GM23248 (cell line): ENCODE measurements at regions of chr1 and their contacts with region 1.

Region 1: GRCh38 chr1:26787706-26788514 is at the start of gene PIGV:
- DNase-seq: peak; percentile 95
- H3K4me3 ChIP-seq: peak within 1 kb of the TSS; percentile 82
- H3K27ac ChIP-seq: peak within 1 kb of the TSS; percentile 98
- H3K4me1 ChIP-seq: peaks cover 44% of the 10 kb centered on the region
- H3K27me3 ChIP-seq: no peaks in the 10 kb centered on the region
- total RNA-seq, gene PIGV: 28.9 and 31.0 TPM in 2 replicates

Region 2: DNA sequence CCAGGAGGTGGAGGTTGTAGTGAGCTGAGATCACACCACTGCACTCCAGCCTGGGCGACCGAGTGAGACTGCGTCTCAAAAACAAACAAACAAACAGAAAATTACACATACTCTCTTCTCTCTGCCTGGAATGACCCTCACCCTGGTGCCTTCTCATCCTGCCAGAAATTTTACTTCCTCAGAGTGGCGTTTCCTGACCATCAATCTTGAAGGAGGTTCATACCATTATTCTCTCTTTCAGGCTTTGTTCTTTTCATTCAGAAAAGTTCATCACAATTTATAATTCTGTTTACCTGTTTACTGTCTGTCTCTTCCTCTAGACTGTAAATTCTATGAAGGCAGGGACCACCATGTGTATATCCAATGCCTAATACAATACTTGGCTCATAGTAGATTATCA is 179.0 kb before region 1 on chr1:
- in situ Hi-C with region 1: loop called (anchors 5 kb)
- DNase-seq: no peak
- H3K4me3 ChIP-seq: no peak overlapping the region
- H3K27ac ChIP-seq: no peak overlapping the region
- H3K4me1 ChIP-seq: no peaks in the 10 kb centered on the region
- H3K27me3 ChIP-seq: no peaks in the 10 kb centered on the region

Region 3: DNA sequence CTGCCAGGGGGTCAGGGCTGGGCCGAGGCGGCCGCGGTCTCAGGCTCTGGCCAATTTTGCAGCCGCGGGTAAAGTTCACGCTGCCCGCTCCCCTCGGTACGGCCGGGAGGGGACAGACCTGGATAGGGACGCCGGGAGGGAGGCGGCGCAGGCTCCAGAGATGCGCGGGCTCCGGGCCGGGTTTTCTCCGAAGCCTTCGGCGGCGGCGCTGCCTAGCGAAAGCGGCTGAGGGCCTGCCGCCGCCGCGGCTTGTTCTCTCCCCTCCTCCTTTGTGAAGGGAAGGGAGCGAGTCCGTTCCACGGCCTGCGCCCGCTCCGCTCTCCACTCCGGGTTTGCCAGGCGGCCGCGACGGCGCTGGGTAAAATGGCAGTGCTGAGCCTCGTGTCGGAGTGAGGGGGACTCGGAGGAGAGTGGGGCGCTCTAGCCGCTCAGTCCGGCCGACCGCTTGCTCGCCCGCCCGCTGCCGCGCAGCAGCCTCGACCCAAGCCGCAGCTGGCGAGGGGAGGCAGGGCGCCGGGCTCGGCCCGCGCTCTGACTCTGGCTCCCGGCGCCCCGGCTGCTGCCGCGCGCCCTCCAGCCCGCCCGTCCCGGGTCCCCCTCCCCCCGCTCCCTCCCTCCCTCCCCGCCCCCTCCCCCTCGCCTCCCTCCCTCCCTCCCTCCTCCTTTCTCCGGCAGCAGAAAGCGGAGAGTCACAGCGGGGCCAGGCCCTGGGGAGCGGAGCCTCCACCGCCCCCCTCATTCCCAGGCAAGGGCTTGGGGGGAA is 92.4 kb before region 1 on chr1 and contains the start of gene ARID1A:
- in situ Hi-C with region 1: loop called (anchors 10 kb)
- DNase-seq: peak; percentile 98
- H3K4me3 ChIP-seq: peak within 1 kb of the TSS; percentile 83
- H3K27ac ChIP-seq: peak within 1 kb of the TSS; percentile 91
- H3K4me1 ChIP-seq: peaks cover 48% of the 10 kb centered on the region
- H3K27me3 ChIP-seq: no peaks in the 10 kb centered on the region
- total RNA-seq, gene ARID1A: 11.6 and 13.4 TPM in 2 replicates

Region 4: DNA sequence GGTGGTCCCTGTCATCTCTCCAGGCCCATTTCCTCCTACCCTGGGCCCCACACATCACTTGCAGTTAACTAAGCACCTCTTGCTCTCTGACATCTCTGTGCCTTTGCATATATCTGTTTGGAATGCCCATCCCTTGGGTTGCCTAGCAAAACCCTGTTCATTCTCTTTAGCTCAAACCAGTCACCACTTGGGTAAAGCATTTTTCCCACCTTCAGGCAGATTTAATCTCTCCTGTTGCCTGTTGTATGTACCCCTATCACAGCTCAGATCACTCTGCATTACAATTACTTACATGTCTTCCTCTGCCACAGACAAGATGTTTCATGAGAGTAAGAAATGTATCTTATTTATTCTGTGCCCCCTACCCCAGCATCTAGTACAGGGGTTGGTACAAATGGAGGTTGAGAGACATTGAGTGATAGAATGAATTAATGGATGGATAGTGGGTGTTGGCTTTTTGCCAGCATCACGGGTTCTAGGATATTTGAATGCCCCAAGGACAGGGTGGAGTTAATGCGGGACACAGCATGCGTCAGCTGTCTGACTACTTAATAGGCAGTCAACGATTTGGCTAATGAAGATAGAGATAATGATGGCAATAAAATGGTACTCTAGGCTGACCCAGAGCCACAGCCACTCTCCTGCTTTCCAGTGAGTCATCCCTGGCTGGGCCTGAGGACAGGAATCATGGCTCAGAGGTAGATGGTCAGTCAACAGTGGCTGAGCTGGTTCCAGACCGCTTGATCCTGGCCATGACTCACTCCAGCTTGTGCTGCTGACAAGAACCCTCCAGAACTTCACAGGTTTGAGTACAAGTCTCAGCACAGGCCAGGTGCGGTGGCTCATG is 119.4 kb after region 1 on chr1:
- in situ Hi-C with region 1: no loop called
- DNase-seq: peak; percentile 95
- H3K4me3 ChIP-seq: no peak overlapping the region
- H3K27ac ChIP-seq: peak overlapping the region; percentile 24; the same call in 1 of the 2 replicates
- H3K4me1 ChIP-seq: peaks cover 4% of the 10 kb centered on the region
- H3K27me3 ChIP-seq: no peaks in the 10 kb centered on the region

Region 5: DNA sequence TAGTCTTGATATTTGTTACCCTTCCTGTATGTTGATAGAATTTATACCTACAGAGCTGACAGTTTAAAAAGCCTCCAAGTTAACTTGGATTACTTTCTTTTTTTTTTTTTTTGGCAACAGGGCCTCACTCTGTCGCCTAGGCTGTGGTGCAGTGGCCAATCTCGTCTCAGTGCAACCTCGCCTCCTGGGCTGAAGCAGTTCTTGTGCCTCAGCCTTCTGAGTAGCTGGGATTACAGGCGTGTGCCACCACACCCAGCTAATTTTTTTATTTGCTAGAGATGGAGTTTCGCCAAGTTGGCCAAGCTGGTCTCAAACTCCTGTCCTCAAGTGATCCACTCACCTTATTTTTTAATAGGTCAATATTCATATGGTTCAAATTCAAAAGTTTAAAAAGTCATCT is 479.2 kb after region 1 on chr1:
- in situ Hi-C with region 1: no loop called
- DNase-seq: no peak
- H3K4me3 ChIP-seq: no peak overlapping the region
- H3K27ac ChIP-seq: no peak overlapping the region
- H3K4me1 ChIP-seq: no peaks in the 10 kb centered on the region
- H3K27me3 ChIP-seq: no peaks in the 10 kb centered on the region